ENCODE measurements at regions of chr9 and their contacts with region 1.

Region 1: GRCh38 chr9:98775831-98776441 is 20.4 kb downstream of the ANKS6 start:
- DNase-seq: peak; percentile 82
- CTCF ChIP-seq: peak; percentile 61

Region 2: DNA sequence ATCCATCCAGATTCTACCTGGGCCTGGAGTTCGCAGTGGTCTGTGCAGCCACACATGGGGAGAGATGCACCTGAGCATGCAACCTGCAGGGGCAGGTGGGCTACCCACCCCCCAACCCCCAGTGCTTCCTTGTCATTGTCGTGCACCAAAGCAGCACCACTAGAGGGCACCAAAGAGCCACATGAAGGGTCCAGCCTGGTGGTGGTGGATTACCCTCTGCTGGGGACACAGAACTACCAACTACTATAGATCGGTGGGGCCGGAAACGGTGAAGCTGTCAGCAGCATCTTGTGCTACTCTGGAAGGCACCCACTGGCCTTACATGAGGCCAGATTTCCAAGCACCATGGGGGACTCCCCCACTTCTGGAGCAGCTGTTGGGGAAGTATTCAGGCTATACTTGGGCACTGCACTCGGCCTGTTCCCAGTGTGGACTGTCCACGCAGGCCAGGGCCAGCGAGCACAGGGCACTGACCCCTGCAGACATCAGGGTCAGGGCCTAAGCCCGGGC is 460.3 kb before region 1 on chr9:
- in situ Hi-C with region 1: loop called (anchors 10 kb)
- DNase-seq: peak; percentile 89
- CTCF ChIP-seq: peak; percentile 94

Region 3: DNA sequence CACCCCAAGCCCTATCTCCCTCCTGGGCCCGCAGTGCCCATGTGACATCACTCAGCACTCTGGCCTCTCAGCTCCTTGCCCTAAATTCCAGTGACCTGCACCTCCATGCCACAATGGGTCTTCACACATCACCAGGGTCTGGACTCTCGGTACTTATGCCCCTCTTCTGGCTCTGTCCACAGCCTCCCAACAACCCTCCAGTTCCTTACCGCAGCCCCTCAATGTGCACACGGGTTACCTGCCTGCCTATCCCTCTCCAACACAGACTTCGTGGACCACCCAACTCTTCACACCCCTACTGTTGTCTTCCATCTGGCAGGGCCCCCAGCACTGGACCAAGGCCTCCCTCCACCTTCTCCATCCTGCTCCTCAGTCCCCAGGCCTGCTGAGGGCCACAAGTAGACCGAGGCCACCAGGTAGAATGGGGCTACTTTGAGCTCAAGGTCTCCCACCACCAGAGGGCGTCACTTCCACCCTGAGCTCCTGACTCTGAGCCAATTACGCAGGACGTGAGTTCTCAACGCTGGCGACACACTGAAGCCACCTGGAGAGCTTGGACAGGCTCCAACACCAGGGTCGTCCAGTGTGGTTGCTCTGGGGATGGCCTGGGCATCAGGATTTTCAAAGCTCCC is 239.3 kb before region 1 on chr9:
- in situ Hi-C with region 1: loop called (anchors 25 kb)
- DNase-seq: peak; percentile 65
- CTCF ChIP-seq: peak; percentile 46

Region 4: DNA sequence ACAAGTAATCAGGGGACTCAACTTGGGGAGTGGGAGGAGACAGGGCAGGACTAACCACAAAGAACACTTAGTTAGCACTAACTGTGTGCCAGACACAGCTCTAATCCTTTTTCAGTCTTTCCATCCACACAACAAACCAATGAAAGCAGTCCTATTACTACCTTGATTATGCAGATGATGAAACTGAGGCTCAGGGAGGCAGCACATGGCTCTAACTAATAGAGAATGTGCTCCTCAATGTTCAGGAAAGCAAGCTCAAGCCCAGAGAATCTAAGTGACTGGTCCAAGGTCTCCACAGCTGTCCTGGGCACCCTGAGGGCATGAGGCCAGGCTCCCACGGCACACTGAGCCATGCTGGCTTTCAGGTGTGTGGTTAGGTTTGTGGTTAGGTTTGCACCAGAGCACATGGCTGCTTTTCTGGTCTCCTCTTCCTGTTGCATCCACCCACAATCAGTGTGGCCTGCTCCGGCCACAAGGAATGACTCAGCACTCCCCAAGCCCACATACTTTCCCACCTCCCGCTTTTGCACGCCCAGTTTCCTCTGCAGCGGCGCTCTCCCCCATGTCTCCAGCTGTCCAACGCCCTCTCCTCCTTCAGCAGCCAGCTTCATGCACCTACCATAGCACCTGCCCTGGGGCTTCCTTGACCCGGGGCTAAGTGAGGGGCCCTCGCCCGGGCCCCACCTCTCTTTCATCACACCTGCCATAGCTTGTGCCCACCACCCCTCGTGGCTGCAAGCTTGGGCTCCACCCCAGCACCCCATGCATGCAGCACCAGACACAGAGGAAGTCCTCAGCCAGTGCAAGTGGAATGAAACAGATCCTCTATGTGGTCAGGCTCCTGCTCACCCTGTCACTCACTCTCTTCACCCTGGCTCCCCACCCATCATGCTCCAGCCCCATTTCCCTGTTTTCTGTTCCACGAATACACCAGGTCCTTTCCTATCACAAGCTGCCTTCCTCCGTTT is 200.3 kb before region 1 on chr9:
- in situ Hi-C with region 1: no loop called
- DNase-seq: peak; percentile 78
- CTCF ChIP-seq: no peak

Region 5: DNA sequence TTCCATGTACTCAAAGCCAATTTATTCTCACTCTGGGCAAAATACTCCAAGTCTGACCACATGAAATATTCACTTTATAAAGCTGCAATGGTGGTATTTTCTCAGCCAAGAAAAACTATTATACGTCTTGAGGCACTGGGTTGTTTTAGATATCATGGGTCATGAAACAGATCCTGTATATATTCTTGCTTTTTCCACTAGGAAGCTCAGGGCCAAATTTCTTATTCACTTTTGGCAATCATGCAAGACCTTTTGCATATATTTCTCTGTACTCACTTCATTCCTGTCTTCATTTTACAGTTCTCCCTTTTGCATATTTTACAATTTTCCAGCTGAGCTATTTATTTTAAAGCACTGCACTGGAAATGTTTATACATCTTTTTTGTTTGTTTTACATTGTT is 117.0 kb before region 1 on chr9:
- in situ Hi-C with region 1: no loop called
- DNase-seq: no peak
- CTCF ChIP-seq: no peak

Measured in GM13976 (cell line).